H1 (cell line): ENCODE measurements at regions of chr3 and their contacts with region 1.

Region 1: GRCh38 chr3:75042941-75043340 is 428.5 kb upstream of the CNTN3 start:
- DNase-seq: peak; percentile 5 to 47
- H3K4me3 ChIP-seq: no peak overlapping the region
- H3K27ac ChIP-seq: no peak overlapping the region
- H3K4me1 ChIP-seq: peaks cover 0 to 2% (median 0%) of the 10 kb centered on the region in 4 experiments; a peak in 1 of 7 replicates
- H3K27me3 ChIP-seq: no peaks in the 10 kb centered on the region
- CTCF ChIP-seq: peak in 2 of 3 experiments; percentile 52 to 62; a peak in 3 of 4 replicates
- EP300 ChIP-seq: no peak
- POLR2A ChIP-seq: no peak
- RAD21 ChIP-seq: peak; percentile 71 to 75

Region 2: DNA sequence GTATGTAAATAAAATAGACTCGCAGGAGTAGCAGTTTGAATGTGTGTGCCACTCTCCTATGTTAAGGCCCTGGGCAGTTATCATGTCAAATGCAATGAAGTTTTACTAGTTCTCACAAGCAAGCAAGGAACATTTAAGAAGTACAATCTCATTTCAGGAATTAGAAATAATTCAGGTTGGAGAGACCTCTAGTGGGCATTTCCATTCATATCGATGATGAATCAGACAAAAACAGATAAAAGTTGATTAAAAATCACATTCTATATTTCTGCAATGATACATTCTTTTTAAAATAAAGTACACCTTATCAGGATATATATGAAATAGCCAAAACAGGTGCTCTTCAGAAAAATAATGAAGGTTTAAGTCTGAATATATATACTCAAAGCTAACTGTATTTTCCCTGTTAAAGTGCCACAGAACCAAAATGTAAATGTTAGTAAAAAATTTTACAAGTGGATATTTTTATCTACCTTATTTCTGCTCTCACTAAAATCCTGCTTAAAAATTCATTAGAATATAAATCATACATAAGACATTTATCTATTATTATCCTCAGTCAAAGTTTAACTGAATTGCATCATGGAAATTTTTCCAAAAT is 128.8 kb after region 1 on chr3:
- CTCF ChIA-PET with region 1: interaction called, 19 read pairs
- POLR2A ChIA-PET with region 1: no interaction called
- DNase-seq: no peak
- H3K4me3 ChIP-seq: no peak overlapping the region
- H3K27ac ChIP-seq: no peak overlapping the region
- H3K4me1 ChIP-seq: no peaks in the 10 kb centered on the region
- H3K27me3 ChIP-seq: no peaks in the 10 kb centered on the region
- CTCF ChIP-seq: peak in 2 of 3 experiments; percentile 20 to 24; a peak in 2 of 4 replicates
- EP300 ChIP-seq: no peak
- POLR2A ChIP-seq: no peak
- RAD21 ChIP-seq: peak; percentile 53 to 67